ENCODE measurements at regions of chr6 and their contacts with region 1.

Region 1: DNA sequence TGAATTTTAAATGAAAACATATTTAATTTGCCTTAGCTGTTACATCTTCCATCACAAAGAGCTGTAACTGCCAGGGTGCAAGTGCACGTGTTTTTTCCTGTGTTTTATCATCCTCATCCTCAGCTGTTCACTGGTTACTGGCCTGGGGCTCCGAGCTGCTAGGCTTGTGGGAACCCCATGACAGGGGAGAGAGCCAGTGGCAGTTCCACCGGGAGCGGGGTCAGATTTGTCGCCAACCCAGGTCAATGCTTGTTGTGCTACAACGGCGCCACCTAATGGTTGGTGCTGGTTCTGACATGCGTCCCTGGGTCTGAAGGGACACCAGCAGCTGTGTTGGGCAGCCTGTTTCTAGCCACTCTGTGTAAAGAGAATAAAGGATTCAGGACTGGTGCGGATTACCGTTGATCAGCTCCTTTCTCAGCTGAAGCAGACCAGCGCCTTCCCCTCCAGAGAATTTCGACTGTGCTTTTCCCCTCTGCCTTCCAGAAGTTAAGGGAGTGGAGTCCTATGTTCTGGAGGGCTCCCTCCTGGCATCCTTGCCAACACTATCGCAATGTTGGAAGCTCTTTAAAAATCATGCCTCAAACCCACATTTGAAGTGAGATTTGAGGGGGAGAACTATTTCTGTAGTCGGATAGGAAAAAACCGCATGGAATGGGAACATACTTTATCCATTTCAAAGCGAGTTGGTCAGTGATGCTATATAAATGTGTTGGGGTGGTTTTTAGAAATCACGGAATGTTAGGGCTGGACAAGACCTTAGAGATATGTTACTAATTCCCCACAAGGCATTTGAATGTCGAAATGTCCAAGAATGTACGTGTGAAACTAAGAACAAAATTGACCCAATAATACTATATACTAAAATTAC is 32.1 kb downstream of the SUMO4 start:
- DNase-seq: peak; percentile 83
- ATAC-seq: peak; percentile 95
- H3K4me3 ChIP-seq: 0 out of 6 replicates have a peak overlapping the region, but pooled peaks of 1 of the 3 experiments have one; percentile 22
- H3K27ac ChIP-seq: no peak overlapping the region
- H3K4me1 ChIP-seq: peaks cover 18% of the 10 kb centered on the region
- H3K27me3 ChIP-seq: peaks cover 4 to 20% of the 10 kb centered on the region in 2 experiments; a peak in 4 of 5 replicates
- CTCF ChIP-seq: peak; percentile 100
- EP300 ChIP-seq: no peak
- POLR2A ChIP-seq: no peak
- RAD21 ChIP-seq: peak; percentile 99

Region 2: DNA sequence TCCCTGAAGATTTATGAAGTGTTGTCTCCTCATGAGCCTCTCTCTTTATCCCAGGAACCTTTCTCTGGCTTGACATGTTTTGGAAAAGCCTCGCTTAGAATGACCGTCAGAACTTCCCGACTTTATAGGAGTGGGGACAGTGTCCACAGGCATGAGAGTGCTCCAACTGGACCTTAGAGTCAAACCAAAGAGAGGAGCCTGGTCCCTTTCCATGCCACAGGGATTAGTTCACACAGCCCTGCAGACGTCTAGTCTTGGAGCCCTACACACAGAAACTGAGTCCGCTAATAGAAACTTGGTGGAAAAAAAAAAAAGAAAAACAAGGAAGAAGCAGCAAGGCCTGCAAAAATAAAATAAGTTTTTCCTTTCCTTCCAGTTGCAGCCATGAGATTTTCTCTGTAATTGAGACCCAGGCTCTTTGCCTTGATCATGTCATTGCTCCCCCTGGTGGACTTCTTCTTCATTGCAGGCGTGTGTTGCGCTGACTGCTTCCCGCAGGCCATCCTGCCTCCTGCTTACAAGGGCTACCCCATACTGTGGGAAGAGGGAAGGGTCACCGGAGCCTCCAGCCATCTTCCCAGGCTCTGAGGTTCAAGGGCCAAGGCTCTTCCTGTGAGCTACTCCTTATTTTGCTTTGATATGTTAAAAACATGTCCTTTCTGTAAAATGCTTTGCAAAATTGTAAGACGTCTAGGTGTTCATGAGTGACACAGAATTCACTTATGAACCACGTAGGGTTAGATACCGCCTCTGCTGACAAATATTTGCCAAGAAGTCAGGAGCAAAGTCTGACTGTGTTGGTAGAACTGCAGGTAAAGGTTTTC is 484.3 kb before region 1 on chr6:
- CTCF ChIA-PET with region 1: no interaction called
- POLR2A ChIA-PET with region 1: no interaction called
- in situ Hi-C with region 1: no loop called
- intact Hi-C with region 1: loop called (anchors 5 kb)
- DNase-seq: peak; percentile 74
- ATAC-seq: peak; percentile 99
- H3K4me3 ChIP-seq: no peak overlapping the region
- H3K27ac ChIP-seq: no peak overlapping the region
- H3K4me1 ChIP-seq: peaks cover 8% of the 10 kb centered on the region
- H3K27me3 ChIP-seq: peaks cover 0 to 11% of the 10 kb centered on the region in 2 experiments; a peak in 1 of 5 replicates
- CTCF ChIP-seq: peak; percentile 93
- EP300 ChIP-seq: 0 out of 4 replicates have a peak, but pooled peaks of 1 of the 2 experiments have one; percentile 12
- POLR2A ChIP-seq: no peak
- RAD21 ChIP-seq: peak; percentile 71

Region 3: GRCh38 chr6:149043476-149044130 is 388.5 kb before region 1 on chr6:
- CTCF ChIA-PET with region 1: interaction called, 10 read pairs
- POLR2A ChIA-PET with region 1: no interaction called
- in situ Hi-C with region 1: no loop called
- intact Hi-C with region 1: no loop called
- DNase-seq: peak; percentile 36
- ATAC-seq: peak; percentile 79
- H3K4me3 ChIP-seq: no peak overlapping the region
- H3K27ac ChIP-seq: no peak overlapping the region
- H3K4me1 ChIP-seq: peaks cover 10% of the 10 kb centered on the region; the same call in 1 of the 2 replicates
- H3K27me3 ChIP-seq: no peaks in the 10 kb centered on the region
- CTCF ChIP-seq: peak; percentile 64
- EP300 ChIP-seq: no peak
- POLR2A ChIP-seq: no peak
- RAD21 ChIP-seq: peak; percentile 53; the same call in 1 of the 2 replicates

Region 4: DNA sequence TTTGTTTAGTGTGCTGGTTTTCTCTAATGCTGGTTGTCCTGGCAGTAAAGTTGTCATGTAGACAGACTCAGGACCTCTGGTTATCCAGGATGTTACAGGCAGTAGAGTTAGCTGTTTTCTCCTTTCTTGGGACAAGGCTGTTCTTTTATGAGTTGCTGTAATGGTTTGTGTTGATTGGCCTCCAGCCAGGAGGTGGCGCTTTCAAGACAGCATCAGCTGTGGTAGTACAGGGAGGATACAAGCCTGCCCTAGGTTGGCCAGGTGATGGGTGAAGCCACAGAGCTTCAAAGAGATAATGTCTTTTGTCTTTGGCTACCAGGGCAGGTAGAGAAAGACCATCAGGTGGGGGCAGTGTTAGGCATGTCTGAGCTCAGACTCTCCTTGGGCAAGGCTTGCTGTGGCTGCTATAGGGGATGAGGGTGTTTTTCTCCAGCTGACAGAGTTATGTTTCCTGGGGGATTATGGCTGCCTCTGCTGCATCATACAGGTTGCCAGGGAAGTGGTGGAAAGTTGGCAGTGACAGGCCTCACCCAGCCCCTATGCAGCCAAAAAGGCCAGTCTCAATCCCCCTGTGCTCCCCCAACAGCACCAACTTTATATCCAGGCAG is 241.8 kb before region 1 on chr6:
- CTCF ChIA-PET with region 1: interaction called, 11 read pairs
- POLR2A ChIA-PET with region 1: no interaction called
- in situ Hi-C with region 1: no loop called
- intact Hi-C with region 1: loop called (anchors 1 kb)
- DNase-seq: peak; percentile 48
- ATAC-seq: peak; percentile 75
- H3K4me3 ChIP-seq: no peak overlapping the region
- H3K27ac ChIP-seq: no peak overlapping the region
- H3K4me1 ChIP-seq: no peaks in the 10 kb centered on the region
- H3K27me3 ChIP-seq: peaks cover 0 to 11% of the 10 kb centered on the region in 2 experiments; a peak in 4 of 5 replicates
- CTCF ChIP-seq: peak; percentile 70
- EP300 ChIP-seq: no peak
- POLR2A ChIP-seq: no peak
- RAD21 ChIP-seq: 0 out of 2 replicates have a peak, but pooled peaks have one; percentile 34